GM10248 (cell line): ENCODE measurements at regions of chr1 and their contacts with region 1.

Region 1: DNA sequence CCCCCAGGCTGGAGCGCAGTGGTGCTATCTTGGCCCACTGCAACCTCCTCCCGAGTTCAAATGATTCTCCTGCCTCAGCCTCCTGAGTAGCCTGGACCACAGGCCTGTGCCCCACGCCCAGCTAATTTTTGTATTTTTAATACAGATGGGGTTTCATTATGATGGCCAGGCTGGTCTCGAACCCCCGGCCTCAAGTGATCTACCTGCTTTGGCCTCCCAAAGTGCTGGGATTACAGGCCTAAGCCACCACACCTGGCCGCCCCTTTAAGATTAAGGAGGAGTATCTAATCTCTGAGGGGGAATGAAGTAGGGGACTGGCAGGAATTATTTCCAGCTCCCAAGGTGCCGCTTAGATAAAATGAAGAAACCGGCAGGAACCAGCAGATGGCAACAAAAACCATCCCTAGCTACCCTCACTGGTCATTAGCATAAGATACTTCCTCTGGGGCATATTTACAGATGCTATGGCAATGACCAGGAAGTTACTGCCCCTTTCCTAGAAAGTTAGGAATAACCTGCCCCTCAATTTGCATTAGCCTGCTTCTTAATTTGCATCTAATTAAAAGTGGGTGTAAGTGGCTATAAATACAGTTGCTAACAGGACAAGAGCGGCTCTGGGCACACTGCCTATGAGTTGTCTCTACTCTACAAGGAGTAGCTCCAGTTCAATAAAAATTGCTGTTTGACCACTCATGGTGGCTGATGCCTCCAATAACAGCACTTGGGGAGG is 7.1 kb upstream of the NSUN4 start:
- DNase-seq: peak; percentile 48
- CTCF ChIP-seq: peak; percentile 45

Region 2: GRCh38 chr1:46364612-46365011 is 31.1 kb after region 1 on chr1:
- CTCF ChIA-PET with region 1: interaction called, 4 read pairs
- POLR2A ChIA-PET with region 1: interaction called, 10 read pairs
- DNase-seq: no peak
- CTCF ChIP-seq: no peak

Region 3: DNA sequence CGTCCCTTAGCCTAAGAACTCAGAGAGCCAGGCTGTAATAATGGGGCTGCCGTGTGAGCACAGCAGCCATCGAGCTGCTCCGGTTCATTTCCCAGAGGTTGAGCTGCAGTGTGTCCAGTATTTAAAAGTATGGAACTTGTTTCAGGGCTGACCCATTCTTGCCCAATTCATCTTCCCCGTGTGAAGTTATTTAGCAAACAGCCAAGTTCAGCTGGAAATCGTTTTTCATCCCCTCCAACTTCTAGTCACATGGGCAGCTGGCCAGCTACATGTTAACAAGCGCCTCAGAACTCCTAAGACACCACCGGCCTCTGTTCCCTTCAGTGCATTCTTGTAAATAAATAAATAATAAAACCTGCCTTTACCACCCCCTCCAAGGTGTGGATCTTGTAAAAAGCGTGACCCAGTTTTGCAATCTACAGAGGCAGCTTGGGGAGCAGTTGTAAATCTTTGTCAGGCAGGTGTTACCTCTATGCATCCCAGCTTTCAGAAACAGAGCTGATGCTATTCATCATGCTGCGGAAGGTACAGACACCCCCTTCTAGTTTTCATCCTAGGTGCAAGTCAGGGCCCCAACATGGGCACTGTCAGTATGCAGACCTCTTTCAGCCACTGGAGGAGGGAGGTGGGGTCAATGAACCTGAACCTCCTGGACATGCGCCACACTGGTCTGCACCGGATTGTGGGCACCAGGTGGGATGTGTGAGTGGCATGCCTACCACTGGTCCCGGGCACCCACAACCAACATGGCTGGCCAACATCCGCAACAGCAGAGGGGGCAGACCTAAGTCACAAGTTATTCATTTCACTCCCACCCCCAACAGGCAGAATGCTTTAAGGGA is 236.6 kb after region 1 on chr1:
- CTCF ChIA-PET with region 1: no interaction called
- POLR2A ChIA-PET with region 1: no interaction called
- DNase-seq: no peak
- CTCF ChIP-seq: no peak